ENCODE measurements at regions of chr7 and their contacts with region 1.

Region 1: DNA sequence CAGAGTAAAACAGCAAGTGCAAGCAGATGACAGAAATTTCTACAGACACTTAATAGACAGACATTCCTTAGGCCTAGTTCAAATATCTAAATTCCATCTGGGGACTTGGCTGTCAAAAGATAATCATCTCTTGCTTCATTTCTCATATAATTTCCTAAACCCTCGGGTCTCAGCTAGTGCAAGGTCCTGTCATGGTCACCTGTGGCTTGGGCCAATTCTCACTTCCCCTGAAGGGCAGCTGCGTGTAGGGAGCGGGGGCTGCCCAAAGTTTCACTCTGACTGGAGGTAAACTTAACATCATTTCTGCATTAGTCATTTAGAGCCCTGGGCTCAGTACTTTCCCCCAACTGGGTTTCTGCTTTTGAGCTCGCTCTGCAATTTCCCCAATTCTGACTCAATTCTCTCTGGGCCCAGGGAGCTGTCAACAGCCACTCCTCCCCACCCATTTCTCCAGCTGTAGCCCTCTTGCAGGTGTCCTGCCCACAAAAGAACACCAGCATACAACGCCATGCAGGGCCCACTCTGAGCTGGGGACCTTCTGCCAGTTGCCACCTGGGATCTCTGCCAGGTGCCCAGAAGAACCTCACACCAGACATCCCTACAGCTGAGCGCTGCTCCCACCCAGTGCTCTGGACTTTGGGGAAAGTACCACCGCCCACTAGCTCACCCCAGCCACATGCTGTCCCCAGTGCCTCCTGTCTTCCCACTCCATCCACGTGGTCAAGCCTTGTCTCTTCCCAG is 38.0 kb downstream of the VOPP1 start:
- DNase-seq: peak; percentile 91
- ATAC-seq: peak; percentile 77
- H3K4me3 Mint-ChIP-seq: peak overlapping the region; percentile 51
- H3K27ac Mint-ChIP-seq: peak overlapping the region; percentile 88
- H3K4me1 Mint-ChIP-seq: peaks cover 81% of the 10 kb centered on the region
- H3K27me3 Mint-ChIP-seq: peaks cover 10% of the 10 kb centered on the region

Region 2: DNA sequence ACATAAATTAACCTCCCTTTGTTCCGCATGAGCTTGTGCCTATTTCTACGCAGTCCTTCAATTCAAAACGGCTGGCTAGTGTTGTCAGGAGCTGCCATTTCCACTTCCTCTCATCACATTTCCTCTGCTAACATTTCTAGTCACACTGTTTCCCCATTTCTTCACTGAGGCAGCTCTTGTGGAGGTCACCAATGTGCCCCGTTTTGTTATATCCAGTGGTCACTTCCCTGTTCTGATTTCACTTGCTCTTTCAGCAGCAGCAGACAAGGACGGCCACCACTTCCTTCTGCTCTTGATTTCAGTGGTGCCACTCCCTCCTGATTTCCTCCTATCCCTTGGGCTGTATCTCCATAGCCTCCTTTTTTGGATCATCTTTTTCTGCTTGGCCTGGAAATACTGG is 710.6 kb before region 1 on chr7:
- CTCF ChIA-PET with region 1: no interaction called
- DNase-seq: no peak
- ATAC-seq: no peak
- H3K4me3 Mint-ChIP-seq: no peak overlapping the region
- H3K27ac Mint-ChIP-seq: no peak overlapping the region
- H3K4me1 Mint-ChIP-seq: peaks cover 1% of the 10 kb centered on the region
- H3K27me3 Mint-ChIP-seq: peaks cover 10% of the 10 kb centered on the region

Region 3: DNA sequence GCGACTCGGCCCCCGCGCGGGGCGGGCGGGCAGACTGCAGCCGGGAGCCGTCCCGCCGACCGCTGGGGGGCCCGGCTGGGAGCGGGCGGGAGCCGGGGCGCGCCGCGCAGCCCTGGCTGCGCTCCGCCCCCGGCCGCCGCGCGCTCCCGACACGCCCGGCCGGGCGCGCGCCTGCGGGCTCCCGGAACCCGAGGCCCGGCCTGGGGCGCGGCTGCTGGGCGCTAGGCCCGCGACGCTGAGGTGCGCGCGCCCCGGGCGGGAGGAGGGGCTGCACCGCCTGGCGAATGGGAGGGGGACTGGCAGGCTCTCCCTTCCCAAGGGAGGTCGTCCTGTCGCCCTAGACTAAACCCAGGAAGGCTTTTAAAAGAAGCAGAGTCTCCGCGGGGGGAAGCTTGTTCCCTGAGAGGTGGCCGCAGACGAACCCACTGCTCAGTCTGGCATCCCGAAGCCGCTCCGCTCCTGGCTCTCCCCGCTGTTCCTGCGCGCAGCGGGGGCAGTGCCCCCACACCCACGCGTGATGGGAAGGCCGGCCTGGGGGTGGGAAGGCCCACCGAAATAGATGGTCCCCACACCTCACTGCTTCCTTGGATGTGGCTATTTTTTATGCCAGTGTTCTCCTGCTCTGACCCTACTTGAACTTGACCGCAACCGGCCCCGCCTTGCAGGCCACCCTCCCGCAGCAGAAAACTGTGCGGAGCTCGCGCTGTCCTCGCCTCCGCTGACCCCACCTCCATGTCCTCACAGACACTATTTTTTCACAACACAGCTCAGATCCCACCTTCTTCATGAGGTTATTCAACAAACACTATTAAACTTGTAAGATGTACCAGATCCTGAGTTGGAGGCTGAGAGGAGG is 38.3 kb after region 1 on chr7 and contains the start of gene VOPP1:
- CTCF ChIA-PET with region 1: interaction called, 33 read pairs
- DNase-seq: peak; percentile 57
- ATAC-seq: peak; percentile 72
- H3K4me3 Mint-ChIP-seq: peak within 1 kb of the TSS; percentile 87
- H3K27ac Mint-ChIP-seq: peak within 1 kb of the TSS; percentile 88
- H3K4me1 Mint-ChIP-seq: peaks cover 57% of the 10 kb centered on the region
- H3K27me3 Mint-ChIP-seq: no peaks in the 10 kb centered on the region
- total RNA-seq, gene VOPP1: 42.3 to 67.3 TPM

Measured in activated CD8-positive, alpha-beta memory T cell treated with anti-CD3 and anti-CD28 coated beads, Interleukin-2, amount 10 ng/mL, durations not matched to agents 7 days and 5 days (primary cell).